Caco-2 (cell line): ENCODE measurements at regions of chr9 and their contacts with region 1.

Region 1: GRCh38 chr9:17063535-17064135 is 71.2 kb upstream of the CNTLN start:
- DNase-seq: peak in 1 of 2 experiments; percentile 36
- H3K4me3 ChIP-seq: no peak overlapping the region
- H3K4me3 Mint-ChIP-seq: no peak overlapping the region
- H3K27ac Mint-ChIP-seq: no peak overlapping the region
- H3K4me1 ChIP-seq: no peaks in the 10 kb centered on the region
- H3K4me1 Mint-ChIP-seq: no peaks in the 10 kb centered on the region
- H3K27me3 ChIP-seq: no peaks in the 10 kb centered on the region
- H3K27me3 Mint-ChIP-seq: peaks cover 3% of the 10 kb centered on the region
- CTCF ChIP-seq: peak; percentile 55 to 69

Region 2: GRCh38 chr9:17075758-17076485 is 12.3 kb after region 1 on chr9:
- CTCF ChIA-PET with region 1: interaction called, 12 read pairs
- POLR2A ChIA-PET with region 1: no interaction called
- intact Hi-C with region 1: no loop called
- DNase-seq: no peak
- H3K4me3 ChIP-seq: no peak overlapping the region
- H3K4me3 Mint-ChIP-seq: no peak overlapping the region
- H3K27ac Mint-ChIP-seq: no peak overlapping the region
- H3K4me1 ChIP-seq: no peaks in the 10 kb centered on the region
- H3K4me1 Mint-ChIP-seq: no peaks in the 10 kb centered on the region
- H3K27me3 ChIP-seq: no peaks in the 10 kb centered on the region
- H3K27me3 Mint-ChIP-seq: no peaks in the 10 kb centered on the region
- CTCF ChIP-seq: no peak

Region 3: DNA sequence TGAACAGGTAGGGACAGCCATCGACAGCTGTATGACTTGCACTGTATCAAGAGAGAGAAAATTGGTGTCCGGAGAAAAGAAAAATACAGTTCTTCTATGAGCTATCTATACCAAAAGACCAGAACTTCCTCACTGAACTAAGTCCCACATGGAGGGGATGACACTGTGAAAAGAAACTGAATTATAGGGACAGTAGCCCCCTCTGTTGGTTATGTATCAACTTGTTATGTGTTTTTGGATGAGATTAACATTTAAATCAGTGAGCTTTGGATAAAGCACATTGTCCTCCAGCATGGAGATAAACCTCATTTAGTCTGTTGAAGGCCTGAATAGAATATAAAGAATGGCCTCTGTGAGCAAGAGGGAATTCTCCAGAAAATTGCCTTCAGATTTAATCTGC is 338.7 kb after region 1 on chr9:
- CTCF ChIA-PET with region 1: no interaction called
- POLR2A ChIA-PET with region 1: no interaction called
- intact Hi-C with region 1: loop called (anchors 5 kb)
- DNase-seq: peak in 1 of 2 experiments; percentile 2
- H3K4me3 ChIP-seq: no peak overlapping the region
- H3K4me3 Mint-ChIP-seq: no peak overlapping the region
- H3K27ac Mint-ChIP-seq: no peak overlapping the region
- H3K4me1 ChIP-seq: no peaks in the 10 kb centered on the region
- H3K4me1 Mint-ChIP-seq: no peaks in the 10 kb centered on the region
- H3K27me3 ChIP-seq: no peaks in the 10 kb centered on the region
- H3K27me3 Mint-ChIP-seq: no peaks in the 10 kb centered on the region
- CTCF ChIP-seq: no peak

Region 4: GRCh38 chr9:17462869-17463464 is 399.3 kb after region 1 on chr9:
- CTCF ChIA-PET with region 1: interaction called, 5 read pairs
- POLR2A ChIA-PET with region 1: no interaction called
- intact Hi-C with region 1: loop called (anchors 1 kb)
- DNase-seq: peak in 1 of 2 experiments; percentile 32
- H3K4me3 ChIP-seq: no peak overlapping the region
- H3K4me3 Mint-ChIP-seq: no peak overlapping the region
- H3K27ac Mint-ChIP-seq: no peak overlapping the region
- H3K4me1 ChIP-seq: no peaks in the 10 kb centered on the region
- H3K4me1 Mint-ChIP-seq: no peaks in the 10 kb centered on the region
- H3K27me3 ChIP-seq: no peaks in the 10 kb centered on the region
- H3K27me3 Mint-ChIP-seq: no peaks in the 10 kb centered on the region
- CTCF ChIP-seq: peak; percentile 42 to 54